GM12878 (cell line): ENCODE measurements at regions of chr2 and their contacts with region 1.

Region 1: GRCh38 chr2:176096986-176097819 is 2.4 kb upstream of the HOXD12 start:
- DNase-seq: no peak
- ATAC-seq: peak; percentile 98
- H3K4me3 ChIP-seq: peak overlapping the region; percentile 44
- H3K27ac ChIP-seq: no peak overlapping the region
- H3K4me1 ChIP-seq: peaks cover 3% of the 10 kb centered on the region; the same call in 1 of the 2 replicates
- H3K27me3 ChIP-seq: peaks cover 14 to 34% of the 10 kb centered on the region in 2 experiments
- CTCF ChIP-seq: peak; percentile 79 to 92 (median 86)
- EP300 ChIP-seq: no peak
- POLR2A ChIP-seq: no peak
- RAD21 ChIP-seq: peak; percentile 82

Region 2: GRCh38 chr2:175251425-175252041 is 845.7 kb before region 1 on chr2:
- CTCF ChIA-PET with region 1: interaction called, 25 read pairs
- POLR2A ChIA-PET with region 1: no interaction called
- RAD21 ChIA-PET with region 1: interaction called, 10 read pairs
- SMC1A ChIA-PET with region 1: interaction called, 10 read pairs
- in situ Hi-C with region 1: no loop called
- intact Hi-C with region 1: loop called (anchors 1 kb)
- DNase-seq: no peak
- ATAC-seq: peak; percentile 56; the same call in 2 of the 3 replicates
- H3K4me3 ChIP-seq: no peak overlapping the region
- H3K27ac ChIP-seq: no peak overlapping the region
- H3K4me1 ChIP-seq: no peaks in the 10 kb centered on the region
- H3K27me3 ChIP-seq: peaks cover 0 to 1% of the 10 kb centered on the region in 2 experiments; a peak in 2 of 4 replicates
- CTCF ChIP-seq: peak; percentile 44 to 53 (median 45)
- EP300 ChIP-seq: no peak
- POLR2A ChIP-seq: no peak
- RAD21 ChIP-seq: peak; percentile 45

Region 3: GRCh38 chr2:175309799-175310198 is 787.4 kb before region 1 on chr2:
- CTCF ChIA-PET with region 1: no interaction called
- POLR2A ChIA-PET with region 1: no interaction called
- RAD21 ChIA-PET with region 1: no interaction called
- SMC1A ChIA-PET with region 1: no interaction called
- in situ Hi-C with region 1: no loop called
- intact Hi-C with region 1: loop called (anchors 2 kb)
- DNase-seq: no peak
- ATAC-seq: peak; percentile 84
- H3K4me3 ChIP-seq: no peak overlapping the region
- H3K27ac ChIP-seq: no peak overlapping the region
- H3K4me1 ChIP-seq: no peaks in the 10 kb centered on the region
- H3K27me3 ChIP-seq: peaks cover 0 to 2% of the 10 kb centered on the region in 2 experiments; a peak in 1 of 4 replicates
- CTCF ChIP-seq: peak; percentile 42 to 48 (median 45); a peak in 5 of 6 replicates
- EP300 ChIP-seq: no peak
- POLR2A ChIP-seq: no peak
- RAD21 ChIP-seq: peak; percentile 48

Region 4: DNA sequence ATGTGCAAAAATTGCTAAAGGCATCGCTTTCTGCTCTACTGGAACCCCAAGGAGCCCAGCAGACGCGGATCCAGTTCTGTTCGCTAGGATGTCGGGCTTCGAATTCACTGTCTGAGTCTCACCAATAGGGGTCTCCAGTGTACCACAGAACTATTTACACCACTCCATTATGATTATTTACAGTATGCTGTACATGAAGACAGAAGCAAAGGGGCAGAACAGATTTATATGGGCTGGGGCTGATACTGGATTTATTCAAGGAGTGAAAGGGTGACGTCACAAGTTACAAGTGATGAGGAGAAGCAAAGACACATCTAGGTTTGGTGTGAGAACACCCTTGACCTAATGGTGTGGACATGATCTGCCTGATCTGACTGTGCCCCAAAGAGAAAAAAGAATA is 730.4 kb before region 1 on chr2:
- CTCF ChIA-PET with region 1: interaction called, 8 read pairs
- POLR2A ChIA-PET with region 1: no interaction called
- RAD21 ChIA-PET with region 1: interaction called, 3 read pairs
- SMC1A ChIA-PET with region 1: interaction called, 3 read pairs
- in situ Hi-C with region 1: loop called (anchors 5 kb)
- intact Hi-C with region 1: loop called (anchors 1 kb)
- DNase-seq: peak; percentile 7
- ATAC-seq: peak; percentile 82
- H3K4me3 ChIP-seq: no peak overlapping the region
- H3K27ac ChIP-seq: no peak overlapping the region
- H3K4me1 ChIP-seq: no peaks in the 10 kb centered on the region
- H3K27me3 ChIP-seq: peaks cover 0 to 3% of the 10 kb centered on the region in 2 experiments; a peak in 2 of 4 replicates
- CTCF ChIP-seq: peak; percentile 66 to 74 (median 69)
- EP300 ChIP-seq: no peak
- POLR2A ChIP-seq: no peak
- RAD21 ChIP-seq: peak; percentile 74

Region 5: DNA sequence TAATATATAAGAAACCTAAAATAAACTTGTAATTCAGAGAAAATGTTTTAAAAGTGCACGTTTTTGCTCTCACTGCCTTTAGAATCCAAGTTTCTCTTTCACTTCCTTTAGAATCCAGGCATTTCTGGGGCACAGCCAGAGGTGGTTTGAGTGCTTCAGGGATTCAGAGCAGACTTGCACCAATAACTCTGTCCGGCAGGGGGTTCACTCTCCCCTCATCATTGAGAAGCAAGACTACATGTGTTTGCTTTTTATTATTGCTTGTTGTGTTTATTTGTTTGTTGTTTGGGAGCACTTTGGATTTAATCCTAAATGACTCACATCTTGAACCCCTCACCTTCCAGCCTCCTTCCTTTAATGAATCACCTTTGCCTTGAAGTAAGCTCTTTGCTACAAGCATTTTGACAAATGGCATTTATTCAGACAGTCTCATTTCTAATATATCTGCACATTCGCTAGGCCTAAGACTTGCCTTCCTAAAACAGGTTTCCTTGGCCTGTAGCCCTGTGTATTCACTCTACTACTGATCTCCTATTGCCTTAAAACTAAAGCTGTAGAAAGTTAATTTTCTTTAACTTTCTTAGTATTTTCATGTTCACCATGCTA is 682.2 kb before region 1 on chr2:
- CTCF ChIA-PET with region 1: interaction called, 11 read pairs
- POLR2A ChIA-PET with region 1: no interaction called
- RAD21 ChIA-PET with region 1: no interaction called
- SMC1A ChIA-PET with region 1: no interaction called
- in situ Hi-C with region 1: no loop called
- intact Hi-C with region 1: loop called (anchors 1 kb)
- DNase-seq: no peak
- ATAC-seq: peak; percentile 81
- H3K4me3 ChIP-seq: no peak overlapping the region
- H3K27ac ChIP-seq: no peak overlapping the region
- H3K4me1 ChIP-seq: no peaks in the 10 kb centered on the region
- H3K27me3 ChIP-seq: no peaks in the 10 kb centered on the region; a peak in 1 of 4 replicates
- CTCF ChIP-seq: peak; percentile 46 to 71 (median 48)
- EP300 ChIP-seq: no peak
- POLR2A ChIP-seq: no peak
- RAD21 ChIP-seq: peak; percentile 46

Region 6: DNA sequence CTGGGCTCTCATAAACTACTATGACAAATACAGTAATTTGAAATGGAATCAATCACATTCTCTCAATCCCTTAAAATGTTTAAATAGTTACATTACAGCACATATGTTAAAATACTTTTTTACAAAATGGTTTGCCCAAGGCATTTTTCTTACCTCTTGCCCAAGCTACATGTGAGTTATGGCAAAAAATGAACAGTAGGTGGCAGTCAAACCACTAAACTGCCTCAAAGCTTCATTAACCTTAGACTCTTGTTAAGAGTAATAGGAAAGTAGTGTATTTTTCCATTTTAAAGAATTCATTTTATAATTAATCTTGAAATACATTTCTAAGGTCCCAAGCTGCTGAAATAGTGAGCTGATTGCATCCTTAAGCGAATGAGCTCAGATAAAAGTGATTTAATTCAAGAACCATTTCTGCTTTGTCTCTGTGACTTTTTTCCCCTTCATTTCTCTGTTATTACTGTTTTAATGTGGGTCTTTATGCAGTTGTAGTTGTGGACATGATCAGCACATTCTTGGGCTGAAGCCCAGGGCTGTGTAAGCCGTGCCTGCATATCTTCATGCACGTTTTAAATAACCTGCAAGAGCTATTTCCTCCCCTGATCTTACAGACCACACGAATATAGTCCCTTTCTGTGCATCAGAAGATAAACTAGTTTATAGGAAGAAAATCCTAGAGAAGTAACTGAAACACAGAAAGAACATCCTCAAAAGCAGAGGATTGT is 406.9 kb before region 1 on chr2:
- CTCF ChIA-PET with region 1: interaction called, 83 read pairs
- POLR2A ChIA-PET with region 1: no interaction called
- RAD21 ChIA-PET with region 1: interaction called, 50 read pairs
- SMC1A ChIA-PET with region 1: interaction called, 56 read pairs
- in situ Hi-C with region 1: loop called (anchors 5 kb)
- intact Hi-C with region 1: loop called (anchors 1 kb)
- DNase-seq: peak; percentile 4
- ATAC-seq: peak; percentile 81
- H3K4me3 ChIP-seq: no peak overlapping the region
- H3K27ac ChIP-seq: no peak overlapping the region
- H3K4me1 ChIP-seq: no peaks in the 10 kb centered on the region
- H3K27me3 ChIP-seq: 0 out of 4 replicates have a peak, but pooled peaks cover 0 to 1% of the 10 kb centered on the region in 2 experiments
- CTCF ChIP-seq: peak; percentile 62 to 69 (median 69)
- EP300 ChIP-seq: no peak
- POLR2A ChIP-seq: no peak
- RAD21 ChIP-seq: peak; percentile 71

Region 7: GRCh38 chr2:176133389-176133788 is 36.2 kb after region 1 on chr2:
- CTCF ChIA-PET with region 1: no interaction called
- POLR2A ChIA-PET with region 1: no interaction called
- RAD21 ChIA-PET with region 1: no interaction called
- SMC1A ChIA-PET with region 1: no interaction called
- in situ Hi-C with region 1: no loop called
- intact Hi-C with region 1: no loop called
- DNase-seq: no peak
- ATAC-seq: no peak
- H3K4me3 ChIP-seq: no peak overlapping the region
- H3K27ac ChIP-seq: no peak overlapping the region
- H3K4me1 ChIP-seq: no peaks in the 10 kb centered on the region
- H3K27me3 ChIP-seq: peaks cover 9 to 28% of the 10 kb centered on the region in 2 experiments
- CTCF ChIP-seq: no peak
- EP300 ChIP-seq: no peak
- POLR2A ChIP-seq: no peak
- RAD21 ChIP-seq: no peak

Region 8: DNA sequence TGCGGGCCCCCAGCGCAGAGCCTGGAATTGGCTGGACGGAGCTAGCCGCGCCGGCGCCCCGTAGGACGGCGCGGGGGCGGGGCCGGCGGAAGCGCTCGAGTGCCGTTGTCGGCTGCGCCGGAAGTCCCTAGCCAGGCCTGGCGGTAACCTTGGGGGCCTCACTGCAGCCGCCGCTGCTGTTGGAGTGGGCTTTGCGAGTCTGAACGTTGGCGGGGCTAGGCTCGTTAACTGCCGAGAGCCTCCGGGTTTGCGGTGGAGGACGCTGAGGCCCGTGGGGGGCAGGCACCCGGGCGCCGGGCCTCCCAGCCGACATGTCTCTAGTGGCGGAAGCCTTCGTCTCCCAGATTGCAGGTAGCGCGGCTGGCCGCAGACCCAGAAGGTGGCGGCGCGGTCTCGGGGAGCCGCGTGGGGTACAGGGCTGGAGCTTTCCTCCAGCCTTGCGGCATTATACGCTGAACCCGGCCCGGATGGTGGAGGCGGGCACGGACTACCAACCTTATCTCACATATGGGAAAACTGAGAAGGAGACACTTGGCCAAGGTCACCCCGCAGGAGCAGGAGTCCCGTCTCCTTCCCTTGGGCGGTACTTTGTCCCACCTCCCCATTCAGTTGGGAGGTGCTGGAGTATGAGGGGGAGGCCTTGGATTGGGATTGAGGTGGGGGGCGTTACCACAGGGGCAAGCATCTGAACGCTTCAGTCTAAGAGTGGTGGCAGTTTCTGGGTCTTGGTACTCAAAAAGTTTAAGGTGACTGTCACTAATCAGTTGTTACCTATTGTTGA is 172.3 kb after region 1 on chr2 and contains the start of gene MTX2:
- CTCF ChIA-PET with region 1: no interaction called
- POLR2A ChIA-PET with region 1: no interaction called
- RAD21 ChIA-PET with region 1: no interaction called
- SMC1A ChIA-PET with region 1: no interaction called
- in situ Hi-C with region 1: no loop called
- intact Hi-C with region 1: no loop called
- DNase-seq: peak; percentile 19
- ATAC-seq: peak; percentile 98
- H3K4me3 ChIP-seq: peak within 1 kb of the TSS; percentile 91
- H3K27ac ChIP-seq: peak within 1 kb of the TSS; percentile 81
- H3K4me1 ChIP-seq: no peaks in the 10 kb centered on the region
- H3K27me3 ChIP-seq: no peaks in the 10 kb centered on the region
- CTCF ChIP-seq: peak in 2 of 3 experiments; percentile 2 to 25; a peak in 1 of 6 replicates
- EP300 ChIP-seq: no peak
- POLR2A ChIP-seq: peak; percentile 97
- RAD21 ChIP-seq: 0 out of 2 replicates have a peak, but pooled peaks have one; percentile 16
- polyA plus RNA-seq, gene MTX2: 15.7 to 36.8 TPM

Region 9: DNA sequence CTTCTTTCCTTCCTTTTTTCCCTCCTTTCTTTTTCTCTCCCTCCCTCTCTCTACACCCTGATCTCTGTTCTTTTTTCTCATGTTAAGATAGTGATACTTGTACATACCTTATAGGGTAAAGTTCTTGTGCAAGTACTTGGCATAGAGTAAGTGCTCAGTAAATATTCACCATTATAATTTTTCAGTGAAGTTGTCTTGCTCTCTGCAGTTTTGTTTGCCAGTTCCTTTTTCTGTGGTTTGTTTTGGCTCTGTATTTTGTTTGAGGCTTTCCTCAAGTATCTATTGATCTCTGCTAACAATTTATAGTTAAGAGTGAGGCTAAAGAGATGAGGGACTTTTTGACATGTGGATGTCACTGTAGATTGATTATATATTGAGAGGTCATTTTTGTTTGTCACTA is 220.0 kb after region 1 on chr2:
- CTCF ChIA-PET with region 1: no interaction called
- POLR2A ChIA-PET with region 1: no interaction called
- RAD21 ChIA-PET with region 1: no interaction called
- SMC1A ChIA-PET with region 1: no interaction called
- in situ Hi-C with region 1: no loop called
- intact Hi-C with region 1: no loop called
- DNase-seq: no peak
- ATAC-seq: no peak; the same call in 2 of the 3 replicates
- H3K4me3 ChIP-seq: no peak overlapping the region
- H3K27ac ChIP-seq: no peak overlapping the region
- H3K4me1 ChIP-seq: peaks cover 7% of the 10 kb centered on the region; the same call in 1 of the 2 replicates
- H3K27me3 ChIP-seq: no peaks in the 10 kb centered on the region
- CTCF ChIP-seq: no peak
- EP300 ChIP-seq: no peak
- POLR2A ChIP-seq: no peak
- RAD21 ChIP-seq: no peak